Cardiac septum (tissue), 1 donor: ENCODE measurements at regions of chr4 and their contacts with region 1.

Region 1: GRCh38 chr4:145644699-145645098 is 25.5 kb downstream of the MMAA start:
- DNase-seq: no peak

Region 2: GRCh38 chr4:145819853-145820181 is 175.1 kb after region 1 on chr4:
- intact Hi-C with region 1: loop called (anchors 5 kb)
- DNase-seq: no peak